ENCODE measurements at regions of chr15 and their contacts with region 1.

Region 1: GRCh38 chr15:22980189-22981050 is at the start of gene CYFIP1:
- DNase-seq: peak; percentile 35 to 92
- H3K4me3 ChIP-seq: peak within 1 kb of the TSS; percentile 89 to 93
- H3K27ac ChIP-seq: peak within 1 kb of the TSS; percentile 79 to 87
- H3K4me1 ChIP-seq: no peaks in the 10 kb centered on the region
- H3K27me3 ChIP-seq: no peaks in the 10 kb centered on the region
- CTCF ChIP-seq: no peak
- total RNA-seq, gene CYFIP1: 94.7 TPM

Region 2: GRCh38 chr15:22838292-22839042 is 142.0 kb before region 1 on chr15 and contains the start of gene NIPA2:
- intact Hi-C with region 1: loop called (anchors 1 kb)
- DNase-seq: peak; percentile 94 to 99
- H3K4me3 ChIP-seq: peak within 1 kb of the TSS; percentile 78 to 79
- H3K27ac ChIP-seq: peak within 1 kb of the TSS; percentile 92 to 93
- H3K4me1 ChIP-seq: peaks cover 8 to 10% of the 10 kb centered on the region in 2 donors
- H3K27me3 ChIP-seq: no peaks in the 10 kb centered on the region
- CTCF ChIP-seq: peak in 2 of 3 experiments; percentile 3 to 28
- total RNA-seq, gene NIPA2: 13.5 TPM

Region 3: DNA sequence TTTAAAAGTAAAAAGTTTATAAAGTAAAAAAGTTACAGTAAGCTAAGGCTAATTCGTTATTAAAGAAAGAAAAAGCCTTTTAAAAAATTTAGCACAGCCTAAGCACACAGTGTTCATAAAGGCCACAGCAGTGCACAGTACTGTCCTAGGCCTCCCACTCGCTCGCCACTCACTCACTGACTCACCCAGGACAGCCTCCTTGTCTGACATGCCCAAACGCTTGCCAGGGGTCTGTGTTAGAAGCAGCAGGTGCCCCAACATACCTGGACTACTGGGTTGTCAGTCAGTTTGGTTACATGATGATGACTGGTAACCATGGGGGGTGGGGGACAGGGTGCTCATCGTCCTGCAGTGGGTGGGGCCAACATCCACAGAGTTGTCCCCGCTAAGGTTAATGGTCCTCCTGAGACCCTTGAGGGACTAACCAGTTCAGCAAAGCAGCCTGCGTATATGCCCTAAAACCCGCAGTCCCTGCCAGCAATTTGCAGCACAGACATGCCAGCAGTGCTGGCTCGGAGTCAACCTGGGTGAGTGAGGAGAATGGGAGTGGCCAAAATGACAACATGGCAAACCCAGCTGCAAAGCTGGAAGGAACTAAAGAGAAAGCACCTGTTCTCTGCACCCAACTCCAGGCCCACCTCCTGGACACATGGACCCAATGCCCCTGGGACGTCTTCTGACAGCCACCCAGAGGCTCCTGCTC is 49.5 kb before region 1 on chr15:
- intact Hi-C with region 1: loop called (anchors 2 kb)
- DNase-seq: no peak
- H3K4me3 ChIP-seq: no peak overlapping the region
- H3K27ac ChIP-seq: peak overlapping the region in 1 of 2 donors; percentile 44
- H3K4me1 ChIP-seq: no peaks in the 10 kb centered on the region
- H3K27me3 ChIP-seq: no peaks in the 10 kb centered on the region
- CTCF ChIP-seq: no peak

Region 4: GRCh38 chr15:22949074-22949547 is 31.3 kb before region 1 on chr15:
- intact Hi-C with region 1: loop called (anchors 5 kb)
- DNase-seq: peak in 1 of 2 donors; percentile 81
- H3K4me3 ChIP-seq: peak overlapping the region in 1 of 2 donors; percentile 25
- H3K27ac ChIP-seq: peak overlapping the region; percentile 57 to 64
- H3K4me1 ChIP-seq: peaks cover 7 to 45% of the 10 kb centered on the region in 2 donors
- H3K27me3 ChIP-seq: no peaks in the 10 kb centered on the region
- CTCF ChIP-seq: no peak

Region 5: DNA sequence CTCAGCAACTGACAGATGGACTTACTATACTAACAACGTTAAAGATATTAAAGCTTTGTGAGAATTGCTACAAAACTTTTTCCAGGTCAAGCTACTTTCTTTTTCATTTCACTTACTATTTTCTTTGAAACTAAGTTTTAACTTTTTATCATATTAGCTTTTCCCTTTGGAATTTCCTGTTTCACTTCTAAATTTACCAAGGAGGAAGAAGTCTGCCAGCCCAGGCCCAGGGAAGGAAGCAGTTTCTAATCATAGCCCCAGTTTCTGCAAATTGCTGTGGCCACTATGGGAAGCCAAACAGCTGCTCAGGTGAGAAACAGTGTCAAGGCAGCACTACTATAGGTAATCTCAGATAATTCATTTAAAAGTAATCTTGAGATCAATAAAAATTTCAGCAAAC is 18.7 kb before region 1 on chr15:
- intact Hi-C with region 1: loop called (anchors 2 kb)
- DNase-seq: peak in 1 of 2 donors; percentile 63
- H3K4me3 ChIP-seq: peak overlapping the region in 1 of 2 donors; percentile 28
- H3K27ac ChIP-seq: peak overlapping the region; percentile 84 to 88
- H3K4me1 ChIP-seq: peaks cover 34 to 54% of the 10 kb centered on the region in 2 donors
- H3K27me3 ChIP-seq: no peaks in the 10 kb centered on the region
- CTCF ChIP-seq: no peak

Region 6: DNA sequence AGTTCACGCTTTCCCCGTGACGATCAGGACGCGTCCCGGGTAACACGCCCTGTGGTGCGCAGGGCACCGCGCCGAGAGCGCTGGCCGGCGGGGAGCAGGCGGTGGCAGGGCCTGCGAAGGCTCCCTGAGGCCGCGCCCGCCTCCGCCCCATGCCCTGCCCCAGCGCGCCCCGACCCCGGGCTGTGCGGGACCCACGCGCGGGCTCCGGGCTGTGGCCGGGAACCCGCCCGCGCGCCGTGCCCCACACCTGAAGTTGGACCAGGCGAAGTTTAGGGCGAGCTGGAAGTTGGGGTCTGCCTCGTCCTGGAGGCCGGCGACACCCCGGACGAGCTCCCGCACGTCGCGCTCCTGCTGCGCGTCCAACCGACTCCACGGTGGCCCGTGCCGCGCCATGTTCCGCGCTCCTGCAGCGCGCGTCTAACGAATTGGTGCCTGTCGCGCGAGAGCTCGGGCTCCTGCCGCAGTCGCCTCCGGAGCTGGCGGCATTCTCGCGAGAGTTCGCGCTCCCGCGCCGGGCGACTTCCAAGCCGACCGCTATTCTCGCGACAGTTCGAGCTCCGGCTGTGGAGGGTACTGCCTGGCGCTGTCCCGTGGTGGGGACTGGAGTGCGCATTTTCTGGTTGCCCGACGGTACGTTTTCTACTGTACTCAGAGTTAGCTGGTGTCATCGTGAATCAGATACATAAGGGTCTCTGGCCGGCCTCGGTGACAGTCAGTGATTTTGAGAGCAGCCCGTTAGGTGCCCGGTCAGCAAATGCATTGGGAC is 58.9 kb after region 1 on chr15 and contains the start of gene TUBGCP5:
- intact Hi-C with region 1: loop called (anchors 1 kb)
- DNase-seq: peak; percentile 91 to 99
- H3K4me3 ChIP-seq: peak within 1 kb of the TSS; percentile 75 to 85
- H3K27ac ChIP-seq: peak within 1 kb of the TSS; percentile 68 to 76
- H3K4me1 ChIP-seq: peaks cover 0 to 8% of the 10 kb centered on the region in 2 donors
- H3K27me3 ChIP-seq: no peaks in the 10 kb centered on the region
- CTCF ChIP-seq: peak in 2 of 3 experiments; percentile 46 to 51
- total RNA-seq, gene TUBGCP5: 17.1 TPM

Region 7: DNA sequence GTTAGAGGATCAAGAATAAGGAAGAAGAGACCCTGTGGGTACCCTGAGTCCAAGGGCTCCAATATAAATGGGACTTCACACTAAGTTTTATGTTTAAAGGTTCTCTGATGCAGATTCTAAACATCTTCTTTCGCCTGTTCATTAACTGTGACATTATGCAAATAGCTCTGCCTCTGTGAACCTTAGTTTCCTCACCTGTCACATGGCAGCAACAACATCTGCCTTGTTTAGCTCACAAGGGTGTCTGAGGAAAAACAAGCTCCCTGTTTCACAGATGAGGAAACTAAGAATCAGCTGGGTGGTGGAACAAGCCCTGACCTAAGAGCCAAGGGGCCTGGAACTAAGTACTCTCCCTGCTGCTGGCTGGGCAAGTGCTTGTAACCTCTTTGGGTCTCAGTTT is 115.4 kb after region 1 on chr15:
- intact Hi-C with region 1: no loop called
- DNase-seq: no peak
- H3K4me3 ChIP-seq: no peak overlapping the region
- H3K27ac ChIP-seq: no peak overlapping the region
- H3K4me1 ChIP-seq: no peaks in the 10 kb centered on the region
- H3K27me3 ChIP-seq: no peaks in the 10 kb centered on the region
- CTCF ChIP-seq: no peak